Naive thymus-derived CD4-positive, alpha-beta T cell (primary cell): ENCODE measurements at regions of chr6 and their contacts with region 1.

Region 1: DNA sequence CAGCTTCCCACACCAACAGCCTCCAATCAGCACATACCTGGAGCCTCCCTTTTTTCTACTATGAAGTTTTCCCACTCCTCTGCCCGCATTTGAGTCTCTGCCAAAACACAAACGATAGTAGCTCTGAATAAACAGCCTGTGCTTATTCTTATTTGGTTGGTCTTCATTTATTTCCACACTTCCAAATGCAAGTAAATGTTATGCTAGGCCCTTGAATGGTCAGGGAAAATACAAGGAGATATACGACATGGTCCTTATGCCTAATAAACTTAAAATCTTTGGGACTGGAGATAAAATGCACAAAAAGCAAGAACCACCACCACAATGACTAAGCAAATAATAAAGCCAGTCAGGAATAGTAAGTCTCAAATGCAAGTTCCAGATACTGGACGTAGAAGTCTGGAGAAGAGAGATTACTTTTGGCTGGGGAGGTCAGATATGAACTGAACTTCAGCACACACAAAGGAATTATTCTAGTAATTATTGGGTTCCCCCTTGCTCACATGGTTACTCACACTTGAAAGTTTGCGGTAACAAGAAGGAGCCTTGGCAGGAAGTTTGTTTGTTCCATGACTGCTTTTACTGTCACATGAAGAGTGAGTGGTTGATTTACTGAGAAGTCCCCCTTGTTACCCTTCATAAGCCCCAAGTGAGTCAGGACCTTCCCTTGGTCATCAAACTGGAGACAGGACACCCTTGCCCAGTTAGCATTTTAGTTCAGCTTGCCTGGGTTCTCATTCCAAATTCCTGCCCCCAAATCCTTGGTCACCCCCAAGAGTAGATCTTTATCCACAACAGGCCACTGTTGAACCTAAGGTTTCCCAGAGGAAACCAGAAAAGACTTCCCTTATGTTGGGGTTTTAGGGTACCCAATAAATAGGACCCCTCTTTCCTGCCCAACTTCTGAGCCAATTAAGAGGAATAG is 511.2 kb upstream of the JARID2 start:
- DNase-seq: peak in 7 of 9 donors; percentile 20 to 54 (median 44)
- ATAC-seq: peak; percentile 78
- H3K4me3 ChIP-seq: no peak overlapping the region
- H3K4me3 Mint-ChIP-seq: peak overlapping the region in 9 of 10 donors; percentile 23 to 72 (median 52)
- H3K27ac ChIP-seq: no peak overlapping the region
- H3K27ac Mint-ChIP-seq: peak overlapping the region in 8 of 9 donors; percentile 12 to 86 (median 54)
- H3K4me1 ChIP-seq: peaks cover 31 to 34% of the 10 kb centered on the region in 2 donors
- H3K4me1 Mint-ChIP-seq: peaks cover 30 to 84% (median 71%) of the 10 kb centered on the region in 7 donors
- H3K27me3 ChIP-seq: no peaks in the 10 kb centered on the region
- H3K27me3 Mint-ChIP-seq: no peaks in the 10 kb centered on the region

Region 2: GRCh38 chr6:14452567-14453527 is 281.8 kb before region 1 on chr6:
- CTCF ChIA-PET with region 1: no interaction called
- POLR2A ChIA-PET with region 1: no interaction called
- intact Hi-C with region 1: loop called in 1 of 2 experiments (anchors 2 kb)
- DNase-seq: peak in 8 of 9 donors; percentile 22 to 66 (median 50)
- ATAC-seq: peak; percentile 77
- H3K4me3 ChIP-seq: peak overlapping the region; percentile 35
- H3K4me3 Mint-ChIP-seq: peak overlapping the region; percentile 56 to 81 (median 72)
- H3K27ac ChIP-seq: no peak overlapping the region
- H3K27ac Mint-ChIP-seq: peak overlapping the region; percentile 33 to 82 (median 68)
- H3K4me1 ChIP-seq: peaks cover 23 to 41% of the 10 kb centered on the region in 2 donors
- H3K4me1 Mint-ChIP-seq: peaks cover 45 to 73% (median 64%) of the 10 kb centered on the region in 7 donors
- H3K27me3 ChIP-seq: no peaks in the 10 kb centered on the region
- H3K27me3 Mint-ChIP-seq: no peaks in the 10 kb centered on the region

Region 3: DNA sequence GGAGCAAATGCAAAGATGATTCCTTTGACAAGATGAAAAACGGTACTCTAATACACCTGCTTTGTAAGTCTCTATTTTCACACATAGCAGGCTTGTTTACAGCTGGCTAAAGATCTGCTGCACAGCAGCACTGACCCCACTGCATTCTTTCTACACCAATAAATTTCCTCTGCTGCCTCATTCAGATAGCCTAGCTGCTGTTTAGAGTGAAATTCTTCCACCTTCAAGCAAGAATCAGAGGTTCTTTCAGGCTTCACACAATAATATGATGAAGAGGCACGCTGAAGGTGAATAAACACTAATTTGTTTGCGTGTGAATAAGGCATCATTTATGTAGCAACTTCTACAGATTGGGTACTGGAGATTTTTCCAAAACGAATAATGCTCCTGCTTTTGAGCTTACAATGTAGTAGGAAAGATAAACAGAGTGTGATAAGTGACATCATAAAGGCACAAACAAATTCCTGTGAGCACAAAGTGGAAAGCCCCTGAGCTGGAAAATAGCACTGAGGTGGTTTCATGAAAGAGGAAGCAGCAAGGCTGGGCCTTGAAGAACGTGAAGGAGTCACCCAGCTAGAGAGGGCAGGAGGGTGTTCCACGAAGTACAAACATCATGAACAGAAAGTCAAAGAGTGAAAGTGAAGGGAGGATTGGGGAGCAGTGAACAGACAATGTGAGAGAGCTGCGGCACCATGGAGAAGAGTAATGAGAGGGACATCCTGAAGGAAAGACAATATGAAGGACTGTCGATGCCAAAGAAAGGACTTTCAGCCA is 73.7 kb before region 1 on chr6:
- CTCF ChIA-PET with region 1: no interaction called
- POLR2A ChIA-PET with region 1: no interaction called
- intact Hi-C with region 1: loop called (anchors 2 to 5 kb)
- DNase-seq: peak in 8 of 9 donors; percentile 41 to 77 (median 58)
- ATAC-seq: peak; percentile 84
- H3K4me3 ChIP-seq: no peak overlapping the region
- H3K4me3 Mint-ChIP-seq: no peak overlapping the region
- H3K27ac ChIP-seq: peak overlapping the region; percentile 58
- H3K27ac Mint-ChIP-seq: no peak overlapping the region
- H3K4me1 ChIP-seq: peaks cover 14 to 56% of the 10 kb centered on the region in 2 donors
- H3K4me1 Mint-ChIP-seq: peaks cover 31 to 48% (median 36%) of the 10 kb centered on the region in 7 donors
- H3K27me3 ChIP-seq: no peaks in the 10 kb centered on the region
- H3K27me3 Mint-ChIP-seq: peaks cover 0 to 18% (median 0%) of the 10 kb centered on the region in 5 donors

Region 4: GRCh38 chr6:14711056-14711703 is 23.5 kb before region 1 on chr6:
- CTCF ChIA-PET with region 1: no interaction called
- POLR2A ChIA-PET with region 1: no interaction called
- intact Hi-C with region 1: no loop called
- DNase-seq: peak in 6 of 9 donors; percentile 18 to 59 (median 26)
- ATAC-seq: peak; percentile 91
- H3K4me3 ChIP-seq: no peak overlapping the region
- H3K4me3 Mint-ChIP-seq: peak overlapping the region in 1 of 10 donors; percentile 27
- H3K27ac ChIP-seq: no peak overlapping the region
- H3K27ac Mint-ChIP-seq: peak overlapping the region in 2 of 9 donors; percentile 7 to 78
- H3K4me1 ChIP-seq: no peaks in the 10 kb centered on the region
- H3K4me1 Mint-ChIP-seq: peaks cover 5 to 24% (median 6%) of the 10 kb centered on the region in 7 donors
- H3K27me3 ChIP-seq: no peaks in the 10 kb centered on the region
- H3K27me3 Mint-ChIP-seq: peaks cover 0 to 4% (median 0%) of the 10 kb centered on the region in 5 donors

Region 5: DNA sequence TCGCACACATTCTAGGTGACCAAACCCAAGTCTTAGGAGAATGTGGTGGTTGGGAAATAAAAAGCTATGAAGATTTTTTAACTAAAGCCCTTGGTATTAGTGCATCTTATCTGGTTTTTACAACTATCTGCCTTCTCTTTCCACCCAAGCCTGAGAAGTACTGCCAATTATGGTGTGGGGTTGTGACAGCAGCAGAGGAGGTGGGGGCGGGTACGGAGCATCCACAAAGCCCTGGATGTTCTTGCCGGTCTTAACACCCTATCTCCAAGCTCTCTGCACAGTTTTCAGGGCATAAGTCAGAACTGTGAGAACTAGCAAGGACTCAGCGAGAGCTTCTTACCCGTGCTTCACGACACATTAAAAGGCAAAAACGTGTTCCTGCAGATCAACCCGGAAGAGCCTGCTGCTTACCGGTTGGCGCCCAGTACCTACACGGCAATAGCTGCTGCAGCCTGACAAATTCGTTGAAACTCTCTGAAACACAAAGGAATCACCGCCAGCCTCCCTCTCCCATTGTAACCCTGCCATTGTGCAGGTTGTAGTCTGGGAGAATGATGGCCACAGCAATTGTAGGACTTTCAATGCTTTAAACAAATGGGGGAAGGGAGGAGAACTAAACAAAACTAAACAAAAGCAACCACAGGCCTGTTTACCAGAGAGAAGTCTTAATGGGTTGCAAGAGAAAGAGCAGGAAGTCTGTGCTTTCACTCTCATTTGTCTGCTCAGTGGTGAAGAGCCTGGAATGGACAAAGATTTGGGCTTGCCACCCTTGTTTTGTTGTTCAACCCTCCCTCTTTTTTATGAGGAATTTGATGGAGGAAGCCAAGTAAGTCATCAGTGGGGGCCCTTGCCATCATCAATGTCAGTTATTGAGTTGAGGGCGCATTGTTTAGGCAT is 50.2 kb after region 1 on chr6:
- CTCF ChIA-PET with region 1: no interaction called
- POLR2A ChIA-PET with region 1: no interaction called
- intact Hi-C with region 1: loop called (anchors 2 to 5 kb)
- DNase-seq: peak in 7 of 9 donors; percentile 20 to 58 (median 47)
- ATAC-seq: peak; percentile 67
- H3K4me3 ChIP-seq: peak overlapping the region; percentile 18
- H3K4me3 Mint-ChIP-seq: peak overlapping the region; percentile 26 to 86 (median 82)
- H3K27ac ChIP-seq: peak overlapping the region; percentile 46
- H3K27ac Mint-ChIP-seq: peak overlapping the region; percentile 78 to 97 (median 90)
- H3K4me1 ChIP-seq: peaks cover 0 to 12% of the 10 kb centered on the region in 2 donors
- H3K4me1 Mint-ChIP-seq: peaks cover 0 to 35% (median 19%) of the 10 kb centered on the region in 7 donors
- H3K27me3 ChIP-seq: no peaks in the 10 kb centered on the region
- H3K27me3 Mint-ChIP-seq: no peaks in the 10 kb centered on the region

Region 6: GRCh38 chr6:14857501-14857900 is 122.8 kb after region 1 on chr6:
- CTCF ChIA-PET with region 1: no interaction called
- POLR2A ChIA-PET with region 1: no interaction called
- intact Hi-C with region 1: loop called in 1 of 2 experiments (anchors 5 kb)
- DNase-seq: peak; percentile 54 to 86 (median 73)
- ATAC-seq: peak; percentile 99
- H3K4me3 ChIP-seq: peak overlapping the region; percentile 55
- H3K4me3 Mint-ChIP-seq: peak overlapping the region; percentile 72 to 95 (median 78)
- H3K27ac ChIP-seq: peak overlapping the region; percentile 59
- H3K27ac Mint-ChIP-seq: peak overlapping the region; percentile 86 to 98 (median 95)
- H3K4me1 ChIP-seq: peaks cover 8 to 20% of the 10 kb centered on the region in 2 donors
- H3K4me1 Mint-ChIP-seq: peaks cover 13 to 40% (median 16%) of the 10 kb centered on the region in 7 donors
- H3K27me3 ChIP-seq: no peaks in the 10 kb centered on the region
- H3K27me3 Mint-ChIP-seq: no peaks in the 10 kb centered on the region

Region 7: DNA sequence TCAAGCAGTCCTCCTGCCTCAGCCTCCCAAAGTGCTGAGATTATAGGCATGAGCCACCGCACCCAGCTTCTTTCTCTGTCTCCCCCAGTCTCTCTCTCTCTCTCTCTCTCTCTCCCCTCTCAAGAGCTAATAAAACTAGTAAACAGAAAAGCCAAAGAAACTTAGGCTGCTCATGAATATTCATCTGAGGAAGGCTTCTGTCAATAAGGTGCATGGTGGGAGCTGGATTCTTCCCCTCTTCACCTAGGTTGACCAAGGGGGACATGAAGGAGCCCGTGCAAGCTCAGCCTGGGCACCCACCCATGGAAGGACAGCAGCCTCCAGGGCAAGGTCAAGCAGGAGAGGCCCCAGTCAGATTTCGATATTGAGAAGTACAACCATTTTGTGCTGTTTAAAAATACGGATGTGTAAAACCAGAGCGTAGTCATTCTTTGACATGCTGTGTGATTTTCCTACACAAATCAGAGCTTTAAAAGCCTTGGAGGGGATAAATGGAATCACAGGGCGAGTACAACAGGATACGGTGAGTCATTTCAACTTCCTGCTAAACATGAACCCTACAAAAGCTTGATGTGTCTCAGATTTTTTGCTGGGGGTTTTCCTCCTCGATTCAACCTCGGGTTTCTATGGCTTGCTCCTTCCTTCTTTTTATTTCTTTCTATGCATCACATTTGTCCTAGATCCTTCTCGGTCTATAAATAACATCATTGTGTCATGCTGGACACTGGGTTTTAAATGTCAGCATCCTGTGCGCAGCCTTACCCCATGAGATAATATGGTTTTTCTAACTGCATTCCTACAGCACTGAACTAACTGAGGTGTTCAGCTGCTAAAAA is 142.3 kb after region 1 on chr6:
- CTCF ChIA-PET with region 1: no interaction called
- POLR2A ChIA-PET with region 1: no interaction called
- intact Hi-C with region 1: loop called in 1 of 2 experiments (anchors 1 kb)
- DNase-seq: peak in 8 of 9 donors; percentile 1 to 65 (median 34)
- ATAC-seq: peak; percentile 88
- H3K4me3 ChIP-seq: peak overlapping the region; percentile 25
- H3K4me3 Mint-ChIP-seq: peak overlapping the region; percentile 52 to 80 (median 66)
- H3K27ac ChIP-seq: peak overlapping the region; percentile 2
- H3K27ac Mint-ChIP-seq: peak overlapping the region; percentile 43 to 92 (median 79)
- H3K4me1 ChIP-seq: peaks cover 15 to 16% of the 10 kb centered on the region in 2 donors
- H3K4me1 Mint-ChIP-seq: peaks cover 26 to 55% (median 35%) of the 10 kb centered on the region in 7 donors
- H3K27me3 ChIP-seq: no peaks in the 10 kb centered on the region
- H3K27me3 Mint-ChIP-seq: no peaks in the 10 kb centered on the region

Region 8: DNA sequence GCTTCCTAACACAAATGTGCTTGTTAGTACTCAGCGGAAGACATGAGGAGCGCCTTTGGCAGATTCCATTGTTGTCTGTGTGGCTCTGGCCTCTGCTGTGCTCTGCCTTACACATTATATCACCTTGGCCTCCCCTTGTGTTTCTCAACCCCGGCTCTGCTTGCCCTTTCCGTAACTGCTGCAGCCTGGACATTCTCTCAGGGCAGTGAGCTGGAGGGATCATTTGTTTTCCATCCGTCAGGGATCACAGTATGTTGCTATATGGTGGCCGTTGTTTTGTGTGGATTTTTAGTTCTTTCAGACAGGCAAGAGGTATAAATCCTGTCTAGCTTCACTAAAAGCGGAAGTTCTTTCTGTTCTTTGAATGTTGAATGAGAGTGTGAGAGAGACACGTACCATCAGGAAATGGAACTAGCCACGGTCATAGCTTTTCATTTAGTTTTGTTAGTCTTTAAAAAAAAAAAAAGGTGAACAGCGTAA is 686.3 kb after region 1 on chr6:
- CTCF ChIA-PET with region 1: no interaction called
- POLR2A ChIA-PET with region 1: no interaction called
- intact Hi-C with region 1: loop called in 1 of 2 experiments (anchors 10 kb)
- DNase-seq: peak in 4 of 9 donors; percentile 24 to 41 (median 28)
- ATAC-seq: peak; percentile 80
- H3K4me3 ChIP-seq: peak overlapping the region; percentile 9
- H3K4me3 Mint-ChIP-seq: peak overlapping the region; percentile 3 to 86 (median 69)
- H3K27ac ChIP-seq: peak overlapping the region; percentile 23
- H3K27ac Mint-ChIP-seq: peak overlapping the region; percentile 63 to 93 (median 87)
- H3K4me1 ChIP-seq: peaks cover 17 to 31% of the 10 kb centered on the region in 2 donors
- H3K4me1 Mint-ChIP-seq: peaks cover 37 to 65% (median 57%) of the 10 kb centered on the region in 7 donors
- H3K27me3 ChIP-seq: no peaks in the 10 kb centered on the region
- H3K27me3 Mint-ChIP-seq: no peaks in the 10 kb centered on the region